ENCODE measurements at regions of chr4 and their contacts with region 1.

Region 1: GRCh38 chr4:95549246-95550114 is 707 bp upstream of the UNC5C start:
- DNase-seq: peak; percentile 41
- H3K4me3 ChIP-seq: peak overlapping the region; percentile 55 to 88 (median 82)
- H3K27ac ChIP-seq: no peak overlapping the region
- H3K4me1 ChIP-seq: peaks cover 20% of the 10 kb centered on the region
- H3K27me3 ChIP-seq: peaks cover 38 to 42% of the 10 kb centered on the region in 2 experiments
- CTCF ChIP-seq: no peak
- POLR2A ChIP-seq: no peak

Region 2: DNA sequence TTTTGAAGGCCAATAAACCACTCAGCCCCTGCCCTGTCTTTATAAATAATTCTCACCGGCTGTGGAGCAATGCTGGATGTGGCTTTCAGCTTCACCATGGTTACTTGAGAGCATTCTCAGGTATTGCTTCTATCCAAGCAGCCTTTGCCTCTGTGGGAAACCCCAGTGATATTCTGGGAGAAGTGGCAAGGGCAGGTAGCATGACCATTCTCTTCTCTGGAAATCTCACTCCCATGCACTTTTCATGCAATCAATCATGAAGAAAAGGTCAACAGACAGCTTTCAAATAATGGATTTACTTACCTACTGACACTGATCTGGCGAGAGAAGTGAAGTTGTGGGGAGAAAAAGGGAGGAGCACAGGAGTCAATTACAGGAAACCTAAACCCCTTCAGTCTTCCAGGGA is 50.2 kb before region 1 on chr4:
- CTCF ChIA-PET with region 1: no interaction called
- POLR2A ChIA-PET with region 1: no interaction called
- dilution Hi-C with region 1: no loop called
- intact Hi-C with region 1: no loop called
- DNase-seq: no peak
- H3K4me3 ChIP-seq: no peak overlapping the region
- H3K27ac ChIP-seq: no peak overlapping the region
- H3K4me1 ChIP-seq: no peaks in the 10 kb centered on the region
- H3K27me3 ChIP-seq: no peaks in the 10 kb centered on the region
- CTCF ChIP-seq: no peak
- POLR2A ChIP-seq: no peak

Region 3: DNA sequence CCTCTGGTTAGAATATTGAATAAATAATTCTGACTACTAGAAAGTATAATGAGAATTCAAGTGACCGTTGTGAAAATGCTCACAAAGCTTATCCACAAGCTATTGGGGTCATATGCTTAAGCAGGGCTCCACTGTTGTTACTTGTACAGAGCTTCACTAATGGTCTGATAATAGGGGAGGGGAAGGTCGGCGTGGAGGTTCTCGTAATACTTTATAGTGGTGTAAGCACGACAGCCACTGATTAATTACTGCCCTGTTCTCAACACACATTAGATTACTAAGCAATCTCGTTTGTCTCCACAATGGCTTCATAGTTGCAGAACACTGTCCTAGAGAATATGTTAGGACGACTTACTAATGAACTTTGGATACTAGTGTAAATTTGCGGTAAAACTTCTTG is 12.3 kb before region 1 on chr4:
- CTCF ChIA-PET with region 1: interaction called, 15 read pairs
- POLR2A ChIA-PET with region 1: no interaction called
- dilution Hi-C with region 1: no loop called
- intact Hi-C with region 1: no loop called
- DNase-seq: no peak
- H3K4me3 ChIP-seq: no peak overlapping the region
- H3K27ac ChIP-seq: no peak overlapping the region
- H3K4me1 ChIP-seq: no peaks in the 10 kb centered on the region
- H3K27me3 ChIP-seq: peaks cover 0 to 2% of the 10 kb centered on the region in 2 experiments
- CTCF ChIP-seq: no peak
- POLR2A ChIP-seq: no peak

Region 4: DNA sequence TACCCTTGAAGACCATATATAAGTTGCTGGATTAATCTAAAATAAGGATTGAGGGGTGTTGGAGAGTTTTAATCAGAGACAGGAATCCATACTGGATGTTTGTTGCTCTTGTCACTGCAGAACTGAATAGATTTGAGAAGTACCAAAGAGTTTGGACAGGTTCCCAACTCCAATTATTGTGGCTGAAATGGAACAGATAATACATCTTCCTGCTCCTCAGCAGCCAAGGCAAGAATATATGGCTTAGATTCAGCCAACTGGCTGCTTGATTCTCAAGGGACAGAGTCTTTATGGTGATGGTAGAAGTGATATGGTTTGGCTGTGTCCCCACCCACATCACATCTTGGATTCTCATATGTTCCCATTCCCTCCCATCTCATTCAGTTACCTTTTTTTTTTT is 193.4 kb after region 1 on chr4:
- CTCF ChIA-PET with region 1: no interaction called
- POLR2A ChIA-PET with region 1: no interaction called
- dilution Hi-C with region 1: no loop called
- intact Hi-C with region 1: no loop called
- DNase-seq: no peak
- H3K4me3 ChIP-seq: no peak overlapping the region
- H3K27ac ChIP-seq: no peak overlapping the region
- H3K4me1 ChIP-seq: no peaks in the 10 kb centered on the region
- H3K27me3 ChIP-seq: no peaks in the 10 kb centered on the region
- CTCF ChIP-seq: no peak
- POLR2A ChIP-seq: no peak